Endothelial cell of umbilical vein (primary cell): ENCODE measurements at regions of chr9 and their contacts with region 1.

Region 1: DNA sequence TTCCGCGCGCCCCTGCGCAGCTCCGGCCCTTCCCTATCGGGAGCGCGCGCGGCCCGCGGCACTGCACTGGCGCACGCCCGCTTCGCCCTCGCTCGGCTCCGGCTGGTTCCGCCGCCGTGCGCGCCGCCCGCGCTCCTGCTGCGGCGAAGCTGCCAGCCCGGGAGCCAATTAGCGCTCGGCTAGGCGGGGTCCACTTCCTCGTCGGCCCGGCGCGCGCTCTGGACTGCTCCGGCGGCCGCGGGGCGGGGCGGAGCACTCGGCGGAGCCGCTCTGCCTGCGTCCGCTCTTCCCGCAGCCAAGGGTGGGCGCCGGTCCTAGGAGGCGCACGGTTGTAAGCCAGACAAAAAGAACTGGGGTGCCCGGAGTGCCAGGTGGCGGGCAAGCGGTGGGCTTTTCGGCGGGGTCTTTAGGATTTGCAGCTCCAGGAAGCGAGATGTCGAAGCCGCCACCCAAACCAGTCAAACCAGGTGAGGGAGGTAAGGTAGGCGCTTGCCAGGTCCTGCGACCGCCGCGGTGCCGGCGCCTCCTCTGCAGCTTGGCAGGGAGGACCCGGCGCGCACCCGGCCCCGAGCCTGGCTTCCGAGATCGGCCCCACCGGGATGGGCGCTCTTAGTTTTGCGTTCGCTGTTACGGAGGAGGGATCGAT is at the start of gene OSTF1:
- DNase-seq: peak; percentile 97
- H3K4me3 ChIP-seq: peak within 1 kb of the TSS; percentile 79 to 90 (median 87)
- H3K27ac ChIP-seq: peak within 1 kb of the TSS; percentile 83
- H3K4me1 ChIP-seq: peaks cover 23% of the 10 kb centered on the region
- H3K27me3 ChIP-seq: no peaks in the 10 kb centered on the region
- CTCF ChIP-seq: no peak
- POLR2A ChIP-seq: no peak
- total RNA-seq, gene OSTF1: 70.9 and 73.6 TPM in 2 replicates

Region 2: GRCh38 chr9:74901001-74901400 is 187.4 kb before region 1 on chr9:
- CTCF ChIA-PET with region 1: no interaction called
- POLR2A ChIA-PET with region 1: no interaction called
- dilution Hi-C with region 1: no loop called
- intact Hi-C with region 1: no loop called
- DNase-seq: no peak
- H3K4me3 ChIP-seq: no peak overlapping the region
- H3K27ac ChIP-seq: no peak overlapping the region
- H3K4me1 ChIP-seq: no peaks in the 10 kb centered on the region
- H3K27me3 ChIP-seq: no peaks in the 10 kb centered on the region
- CTCF ChIP-seq: no peak
- POLR2A ChIP-seq: no peak

Region 3: GRCh38 chr9:74952281-74953151 is 135.9 kb before region 1 on chr9 and contains the start of gene C9orf40:
- CTCF ChIA-PET with region 1: interaction called, 18 read pairs
- POLR2A ChIA-PET with region 1: no interaction called
- dilution Hi-C with region 1: no loop called
- intact Hi-C with region 1: loop called (anchors 2 kb)
- DNase-seq: peak; percentile 86
- H3K4me3 ChIP-seq: peak within 1 kb of the TSS; percentile 60 to 91 (median 61)
- H3K27ac ChIP-seq: peak within 1 kb of the TSS; percentile 54
- H3K4me1 ChIP-seq: peaks cover 4% of the 10 kb centered on the region
- H3K27me3 ChIP-seq: no peaks in the 10 kb centered on the region
- CTCF ChIP-seq: peak; percentile 86 to 93
- POLR2A ChIP-seq: no peak
- total RNA-seq, gene C9orf40: 5.1 and 7.5 TPM in 2 replicates

Region 4: DNA sequence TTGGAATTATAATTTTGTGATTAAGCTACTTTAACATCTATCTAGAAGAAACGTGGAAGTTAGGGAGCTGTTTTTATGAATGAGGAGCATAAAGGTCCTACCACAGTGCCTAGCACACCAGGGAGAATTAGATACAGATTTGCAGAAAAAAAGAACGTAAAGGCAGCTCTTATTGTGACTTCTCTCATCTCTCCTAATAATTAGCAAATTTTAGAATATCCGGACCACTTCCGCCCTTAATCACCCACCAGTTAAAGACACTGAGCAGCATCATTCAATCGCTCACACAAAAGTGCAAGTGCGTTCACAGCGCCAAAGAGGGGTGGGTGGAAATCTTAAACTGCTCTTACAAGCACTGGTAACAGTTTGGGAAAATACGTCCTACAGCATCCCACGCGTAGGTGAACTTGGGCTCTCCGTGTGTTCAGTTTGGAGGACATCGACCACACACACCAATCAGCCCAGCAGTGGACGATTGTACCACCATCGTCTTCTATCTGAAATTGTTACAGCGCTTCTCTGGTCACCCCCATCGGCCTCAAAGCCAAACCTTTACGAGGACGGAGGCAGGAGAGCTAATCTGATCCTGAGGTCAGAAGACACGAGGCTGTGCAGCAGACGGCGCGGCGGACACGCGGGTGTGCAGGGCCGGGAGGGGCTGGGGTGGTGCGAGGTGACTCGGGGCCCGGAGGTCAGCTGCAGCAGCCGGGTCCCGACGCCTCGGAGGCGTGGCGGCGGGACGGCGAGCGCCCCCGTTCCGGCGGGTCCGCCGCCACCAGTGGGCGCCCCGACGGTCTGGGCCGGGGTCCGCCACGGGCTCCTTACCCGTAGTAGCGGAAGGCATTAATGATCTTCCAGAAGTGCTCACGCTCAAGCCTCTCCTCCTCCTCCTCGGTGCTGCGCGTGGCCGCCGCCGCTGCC is 60.9 kb before region 1 on chr9:
- CTCF ChIA-PET with region 1: interaction called, 13 read pairs
- POLR2A ChIA-PET with region 1: interaction called, 3 read pairs
- dilution Hi-C with region 1: no loop called
- intact Hi-C with region 1: loop called (anchors 1 kb)
- DNase-seq: peak; percentile 53
- H3K4me3 ChIP-seq: peak overlapping the region; percentile 15 to 68 (median 61)
- H3K27ac ChIP-seq: peak overlapping the region; percentile 43
- H3K4me1 ChIP-seq: peaks cover 9% of the 10 kb centered on the region
- H3K27me3 ChIP-seq: peaks cover 1 to 2% of the 10 kb centered on the region in 2 experiments
- CTCF ChIP-seq: peak in 1 of 2 donors; percentile 21
- POLR2A ChIP-seq: peak; percentile 10

Region 5: GRCh38 chr9:75108555-75108954 is 20.2 kb after region 1 on chr9:
- CTCF ChIA-PET with region 1: interaction called, 9 read pairs
- POLR2A ChIA-PET with region 1: interaction called, 4 read pairs
- dilution Hi-C with region 1: no loop called
- intact Hi-C with region 1: loop called (anchors 1 kb)
- DNase-seq: peak; percentile 80
- H3K4me3 ChIP-seq: peak overlapping the region in 1 of 3 experiments; percentile 23
- H3K27ac ChIP-seq: peak overlapping the region; percentile 73
- H3K4me1 ChIP-seq: peaks cover 33% of the 10 kb centered on the region
- H3K27me3 ChIP-seq: no peaks in the 10 kb centered on the region
- CTCF ChIP-seq: no peak
- POLR2A ChIP-seq: peak; percentile 26

Region 6: DNA sequence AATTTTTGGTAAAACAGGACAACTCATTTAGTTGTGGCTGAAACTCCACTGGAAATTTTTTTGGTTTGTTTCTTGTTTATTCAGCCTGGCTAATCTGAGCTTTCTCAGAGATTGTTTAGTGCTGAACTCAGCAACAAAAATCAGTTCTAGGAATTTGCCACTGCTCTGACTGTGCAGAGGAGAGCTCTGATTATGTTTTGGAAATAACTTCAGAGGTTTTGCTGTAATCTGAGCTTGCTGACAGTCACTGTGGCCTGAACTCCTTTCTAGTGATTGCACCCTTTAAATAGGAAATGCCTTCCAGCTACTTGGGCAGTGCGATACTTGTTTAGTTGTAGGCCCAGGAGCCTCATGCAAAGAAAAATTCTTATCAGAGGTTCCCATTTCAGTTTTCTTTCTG is 60.2 kb after region 1 on chr9:
- CTCF ChIA-PET with region 1: interaction called, 8 read pairs
- POLR2A ChIA-PET with region 1: interaction called, 3 read pairs
- dilution Hi-C with region 1: no loop called
- intact Hi-C with region 1: loop called (anchors 1 kb)
- DNase-seq: peak; percentile 87
- H3K4me3 ChIP-seq: no peak overlapping the region
- H3K27ac ChIP-seq: peak overlapping the region; percentile 81
- H3K4me1 ChIP-seq: peaks cover 19% of the 10 kb centered on the region
- H3K27me3 ChIP-seq: no peaks in the 10 kb centered on the region
- CTCF ChIP-seq: no peak
- POLR2A ChIP-seq: no peak

Region 7: DNA sequence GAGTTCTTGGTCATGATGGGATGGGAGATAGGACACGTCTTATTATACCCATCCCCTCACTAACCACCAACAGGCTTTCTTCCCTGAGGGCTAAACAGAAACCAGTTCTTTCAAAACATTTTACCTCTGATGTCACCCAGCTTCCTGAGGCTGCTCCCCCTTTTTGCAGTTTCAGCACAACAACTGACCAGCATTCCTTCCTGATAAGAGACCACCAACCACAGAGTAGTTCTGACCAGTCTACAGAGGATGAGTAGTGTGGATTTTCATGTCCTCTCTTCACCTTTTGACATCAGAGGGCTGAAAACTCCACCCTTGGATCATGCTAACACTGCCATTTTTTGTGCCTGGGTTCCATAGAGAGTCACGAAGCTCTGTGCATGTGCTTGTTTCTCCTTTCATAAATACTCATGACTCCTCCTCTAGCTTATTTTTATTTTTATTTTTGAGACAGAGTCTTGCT is 82.5 kb after region 1 on chr9:
- CTCF ChIA-PET with region 1: interaction called, 8 read pairs
- POLR2A ChIA-PET with region 1: interaction called, 11 read pairs
- dilution Hi-C with region 1: no loop called
- intact Hi-C with region 1: loop called (anchors 1 kb)
- DNase-seq: no peak
- H3K4me3 ChIP-seq: no peak overlapping the region
- H3K27ac ChIP-seq: no peak overlapping the region
- H3K4me1 ChIP-seq: peaks cover 33% of the 10 kb centered on the region
- H3K27me3 ChIP-seq: no peaks in the 10 kb centered on the region
- CTCF ChIP-seq: no peak
- POLR2A ChIP-seq: no peak

Region 8: DNA sequence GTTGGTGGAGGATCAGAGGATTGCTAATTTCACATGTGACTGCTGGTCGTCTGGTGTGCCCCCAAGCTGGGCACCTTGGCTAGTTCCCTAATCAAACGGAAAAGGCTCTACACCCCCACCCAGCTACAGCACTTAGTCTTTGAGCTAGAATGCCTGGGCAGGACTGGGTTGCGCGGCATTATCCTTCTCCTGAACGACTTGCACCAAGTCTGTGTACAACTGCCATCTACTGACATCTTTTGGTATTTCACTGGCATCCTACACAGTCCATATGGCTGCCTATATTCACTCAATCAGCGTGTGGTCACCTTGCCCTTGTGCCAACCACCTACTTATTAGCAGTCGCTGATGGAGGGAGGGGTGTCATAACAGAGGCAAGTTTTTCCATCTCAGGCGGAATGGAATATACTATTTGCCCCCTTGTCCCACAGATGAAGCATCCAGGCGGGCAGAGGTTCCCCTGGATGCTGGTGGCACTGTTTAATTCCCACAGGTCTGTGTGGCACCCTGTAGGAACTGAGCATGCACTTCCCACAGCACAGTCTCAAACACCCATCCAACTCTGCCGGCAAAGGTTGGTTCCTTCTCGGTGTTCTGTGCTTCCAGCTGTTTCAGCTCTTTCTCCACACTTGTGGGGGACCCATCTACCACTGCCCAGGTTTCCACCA is 150.1 kb after region 1 on chr9:
- CTCF ChIA-PET with region 1: interaction called, 3 read pairs
- POLR2A ChIA-PET with region 1: no interaction called
- dilution Hi-C with region 1: no loop called
- intact Hi-C with region 1: loop called (anchors 5 kb)
- DNase-seq: peak; percentile 71
- H3K4me3 ChIP-seq: no peak overlapping the region
- H3K27ac ChIP-seq: no peak overlapping the region
- H3K4me1 ChIP-seq: no peaks in the 10 kb centered on the region
- H3K27me3 ChIP-seq: peaks cover 0 to 3% of the 10 kb centered on the region in 2 experiments
- CTCF ChIP-seq: peak; percentile 54 to 57
- POLR2A ChIP-seq: no peak